ENCODE measurements at regions of chr17 and their contacts with region 1.

Region 1: GRCh38 chr17:27906623-27907022 is 13.5 kb upstream of the LYRM9 start:
- DNase-seq: no peak
- H3K4me3 ChIP-seq: no peak overlapping the region
- H3K27ac ChIP-seq: no peak overlapping the region
- H3K4me1 ChIP-seq: peaks cover 0 to 14% of the 10 kb centered on the region in 2 experiments; a peak in 1 of 4 replicates
- H3K27me3 ChIP-seq: peaks cover 5% of the 10 kb centered on the region; the same call in 1 of the 2 replicates
- CTCF ChIP-seq: no peak
- EP300 ChIP-seq: no peak
- RAD21 ChIP-seq: no peak

Region 2: GRCh38 chr17:27846042-27846655 is 60.5 kb before region 1 on chr17:
- CTCF ChIA-PET with region 1: no interaction called
- POLR2A ChIA-PET with region 1: no interaction called
- DNase-seq: no peak
- H3K4me3 ChIP-seq: no peak overlapping the region
- H3K27ac ChIP-seq: no peak overlapping the region
- H3K4me1 ChIP-seq: no peaks in the 10 kb centered on the region
- H3K27me3 ChIP-seq: no peaks in the 10 kb centered on the region; the same call in 1 of the 2 replicates
- CTCF ChIP-seq: no peak
- EP300 ChIP-seq: no peak
- RAD21 ChIP-seq: no peak

Region 3: DNA sequence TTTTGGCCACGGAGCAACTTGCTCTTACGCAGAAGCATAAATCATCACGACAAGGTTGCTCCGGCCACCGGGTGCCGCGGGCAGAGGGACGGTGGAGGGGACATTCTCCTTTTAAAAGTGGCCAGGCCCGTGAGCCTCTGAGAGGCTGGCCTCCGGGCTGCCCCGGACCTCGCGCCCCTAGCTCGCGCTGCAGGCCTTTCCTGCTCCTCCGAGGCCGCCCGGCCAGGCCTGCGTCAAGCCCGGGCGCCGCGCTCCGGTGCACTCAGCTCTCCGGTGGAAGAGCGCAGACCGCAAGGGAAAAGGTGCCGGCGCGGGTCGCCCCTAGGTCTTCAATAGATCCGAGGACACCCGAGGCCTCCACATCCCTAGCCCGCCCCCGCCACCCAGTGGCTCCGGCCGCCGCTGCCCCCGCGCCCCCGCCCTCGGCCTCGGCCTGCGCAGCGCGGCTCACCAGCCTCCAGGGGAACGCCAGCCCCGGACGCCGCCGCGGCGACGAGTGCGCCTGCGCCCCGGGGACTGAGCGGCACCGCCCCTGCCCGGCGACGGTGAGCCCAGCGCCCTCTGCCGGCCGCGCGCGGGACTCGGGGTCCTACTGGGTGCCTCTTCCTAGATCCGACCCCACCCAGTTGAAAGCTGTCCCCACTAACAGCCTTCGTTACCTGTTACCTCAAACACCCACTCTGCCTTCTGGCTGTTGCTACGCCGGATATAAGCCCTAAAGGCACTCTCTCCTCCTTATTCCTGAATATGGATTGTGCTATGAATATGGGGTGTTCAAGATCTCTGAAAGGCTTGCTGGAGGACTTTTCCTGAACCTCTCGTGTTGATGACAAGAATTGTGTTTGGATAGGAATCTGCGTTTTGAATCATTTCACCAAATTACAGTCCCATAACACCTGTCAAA is 13.5 kb before region 1 on chr17 and contains the start of gene LYRM9:
- CTCF ChIA-PET with region 1: interaction called, 22 read pairs
- POLR2A ChIA-PET with region 1: no interaction called
- DNase-seq: peak; percentile 98
- H3K4me3 ChIP-seq: peak within 1 kb of the TSS; percentile 63 to 70
- H3K27ac ChIP-seq: peak within 1 kb of the TSS; percentile 41 to 77; a peak in 2 of 4 replicates
- H3K4me1 ChIP-seq: peaks cover 0 to 5% of the 10 kb centered on the region in 2 experiments; a peak in 2 of 4 replicates
- H3K27me3 ChIP-seq: no peaks in the 10 kb centered on the region
- CTCF ChIP-seq: peak; percentile 91
- EP300 ChIP-seq: no peak
- RAD21 ChIP-seq: peak; percentile 44
- polyA plus RNA-seq, gene LYRM9: 4.6 and 5.7 TPM in 2 replicates